Ascending aorta (tissue), 2 donors: ENCODE measurements at regions of chr9 and their contacts with region 1.

Region 1: DNA sequence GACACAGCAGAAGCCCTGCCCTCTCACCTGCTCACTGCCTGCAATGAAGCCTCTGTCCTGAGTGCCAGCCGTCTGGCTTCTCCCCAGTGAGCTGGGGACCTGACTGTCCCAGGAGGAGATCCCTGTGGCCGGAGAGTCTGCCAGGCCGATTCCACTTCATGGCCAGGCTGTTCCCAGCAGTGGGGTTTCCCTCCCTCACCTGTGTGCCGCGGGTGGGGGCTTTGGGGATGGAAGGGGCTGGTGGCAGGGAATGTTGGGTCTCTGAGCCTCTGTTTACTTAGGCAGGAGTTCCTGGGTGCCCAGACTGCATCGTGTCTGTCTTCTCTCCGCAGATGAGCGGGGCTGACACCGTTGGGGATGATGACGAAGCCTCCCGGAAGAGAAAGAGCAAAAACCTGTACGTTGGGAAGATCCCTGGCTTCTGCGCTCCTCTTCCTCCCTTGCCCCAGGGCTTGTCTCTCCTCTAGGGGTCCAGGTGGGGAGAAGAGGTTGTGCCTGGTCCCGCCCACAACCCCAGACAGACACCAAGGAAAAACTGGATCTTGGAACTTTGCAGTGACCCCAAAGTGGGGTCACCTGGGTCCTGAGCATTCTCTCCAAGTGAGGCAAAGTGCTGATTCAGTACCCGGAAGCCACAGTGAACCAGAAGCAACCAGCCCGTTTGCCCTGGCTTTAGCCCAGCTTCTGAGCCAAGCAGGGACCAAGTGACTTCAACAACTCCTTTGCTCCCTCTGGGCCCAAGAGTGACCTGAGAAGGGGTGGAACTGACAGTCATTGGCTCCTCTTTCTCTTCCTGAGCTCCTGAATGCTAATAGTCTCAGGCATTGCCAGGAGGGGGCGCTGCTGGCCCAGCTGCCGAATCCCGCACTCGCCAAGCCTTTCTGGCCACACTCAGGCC is 127.7 kb downstream of the RGS3 start:
- DNase-seq: peak in 1 of 2 donors; percentile 91
- H3K4me3 ChIP-seq: no peak overlapping the region
- H3K27ac ChIP-seq: peak overlapping the region; percentile 69 to 80
- H3K4me1 ChIP-seq: peaks cover 10 to 44% of the 10 kb centered on the region in 2 donors
- H3K27me3 ChIP-seq: no peaks in the 10 kb centered on the region
- CTCF ChIP-seq: peak; percentile 84 to 94 (median 92)

Region 2: DNA sequence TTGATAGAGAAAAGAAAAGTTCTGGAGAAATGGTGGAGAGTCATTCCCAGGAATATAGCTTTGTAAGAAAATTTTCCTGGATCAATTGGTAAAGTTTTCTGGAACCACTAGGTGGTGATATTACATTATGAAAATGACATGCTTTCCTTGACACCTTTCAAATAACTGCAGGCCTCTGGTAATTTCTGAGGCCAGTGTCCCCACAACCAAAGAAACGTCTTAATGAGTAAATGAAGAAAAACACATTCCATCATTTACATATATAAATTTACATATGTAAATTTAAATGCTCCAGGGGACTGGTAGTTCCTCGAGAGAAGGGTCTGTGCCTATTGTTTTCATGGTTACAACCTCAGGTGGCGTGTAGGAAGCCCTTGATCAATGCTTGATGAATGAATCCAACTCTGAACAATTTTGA is 144.9 kb before region 1 on chr9:
- intact Hi-C with region 1: loop called (anchors 2 kb)
- DNase-seq: no peak
- H3K4me3 ChIP-seq: no peak overlapping the region
- H3K27ac ChIP-seq: peak overlapping the region in 1 of 2 donors; percentile 44
- H3K4me1 ChIP-seq: peaks cover 0 to 14% of the 10 kb centered on the region in 2 donors
- H3K27me3 ChIP-seq: no peaks in the 10 kb centered on the region
- CTCF ChIP-seq: peak; percentile 50 to 69 (median 67)

Region 3: GRCh38 chr9:113622600-113623400 is 31.6 kb after region 1 on chr9:
- intact Hi-C with region 1: loop called (anchors 1 kb)
- DNase-seq: peak; percentile 69 to 90
- H3K4me3 ChIP-seq: no peak overlapping the region
- H3K27ac ChIP-seq: peak overlapping the region; percentile 97 to 98
- H3K4me1 ChIP-seq: peaks cover 34 to 57% of the 10 kb centered on the region in 2 donors
- H3K27me3 ChIP-seq: no peaks in the 10 kb centered on the region
- CTCF ChIP-seq: no peak

Region 4: DNA sequence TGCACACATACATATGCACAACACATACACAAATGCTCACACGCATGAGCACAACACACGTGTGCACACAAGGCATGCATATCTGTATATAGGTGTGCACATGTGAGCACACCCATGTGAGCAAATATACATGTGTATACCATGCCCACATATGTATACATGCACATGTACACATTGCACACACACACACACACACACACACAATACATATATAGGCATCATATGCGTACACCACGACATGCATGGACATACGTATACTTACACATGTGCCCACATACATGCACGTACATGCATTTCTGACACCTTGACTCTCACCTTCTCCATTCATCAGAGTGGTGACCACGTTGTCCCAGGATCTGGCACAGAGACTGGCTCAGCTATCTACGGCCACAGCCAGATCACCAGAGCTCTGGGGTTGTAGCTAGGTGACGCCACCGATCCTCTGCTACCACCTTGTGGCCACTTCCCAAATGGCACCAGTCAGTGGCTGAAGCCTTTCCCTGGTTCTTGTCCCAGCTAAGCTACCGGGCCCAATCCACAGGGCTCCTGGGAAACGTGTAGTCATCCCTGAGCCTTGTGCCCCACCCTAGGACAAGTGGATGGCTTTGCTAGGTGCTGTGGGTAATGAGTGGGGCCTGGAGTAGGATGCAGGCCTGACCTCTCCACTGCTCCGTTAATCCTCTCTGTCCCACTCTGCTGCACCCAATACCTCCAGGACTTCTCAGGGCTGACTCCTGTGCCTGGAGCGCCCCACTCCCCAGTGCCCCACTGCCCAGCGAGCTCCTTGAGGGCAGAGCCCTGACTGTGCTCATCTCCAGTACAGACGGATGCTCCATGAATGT is 66.7 kb after region 1 on chr9:
- intact Hi-C with region 1: loop called (anchors 1 kb)
- DNase-seq: peak; percentile 24 to 91
- H3K4me3 ChIP-seq: no peak overlapping the region
- H3K27ac ChIP-seq: no peak overlapping the region
- H3K4me1 ChIP-seq: peaks cover 5 to 13% of the 10 kb centered on the region in 2 donors
- H3K27me3 ChIP-seq: no peaks in the 10 kb centered on the region
- CTCF ChIP-seq: peak; percentile 94 to 97 (median 95)

Region 5: GRCh38 chr9:114460513-114461199 is 869.4 kb after region 1 on chr9:
- intact Hi-C with region 1: no loop called
- DNase-seq: no peak
- H3K4me3 ChIP-seq: no peak overlapping the region
- H3K27ac ChIP-seq: no peak overlapping the region
- H3K4me1 ChIP-seq: no peaks in the 10 kb centered on the region
- H3K27me3 ChIP-seq: no peaks in the 10 kb centered on the region
- CTCF ChIP-seq: no peak